SK-N-SH (cell line): ENCODE measurements at regions of chr2 and their contacts with region 1.

Region 1: DNA sequence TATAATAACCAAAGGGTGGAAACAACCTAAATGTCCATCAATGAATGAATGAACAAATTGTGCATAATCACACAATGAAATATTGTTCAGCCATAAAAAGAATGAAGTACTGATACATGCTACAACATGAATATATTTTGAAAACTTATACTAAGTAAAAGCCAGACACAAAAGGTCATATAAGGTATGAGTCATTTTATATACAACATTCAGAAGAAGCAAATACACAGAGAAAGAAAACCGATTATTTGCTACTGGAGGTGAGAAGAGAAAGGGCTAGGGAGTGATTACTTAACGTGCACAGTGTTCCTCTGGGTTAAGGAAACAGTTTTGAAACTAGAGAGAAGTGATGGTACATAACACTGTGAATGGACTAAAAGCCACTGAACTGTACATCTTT is 105.3 kb downstream of the GORASP2 start:
- DNase-seq: no peak
- H3K4me3 ChIP-seq: no peak overlapping the region
- H3K27ac ChIP-seq: no peak overlapping the region
- H3K4me1 ChIP-seq: no peaks in the 10 kb centered on the region
- H3K27me3 ChIP-seq: no peaks in the 10 kb centered on the region
- CTCF ChIP-seq: no peak
- EP300 ChIP-seq: no peak
- RAD21 ChIP-seq: no peak

Region 2: DNA sequence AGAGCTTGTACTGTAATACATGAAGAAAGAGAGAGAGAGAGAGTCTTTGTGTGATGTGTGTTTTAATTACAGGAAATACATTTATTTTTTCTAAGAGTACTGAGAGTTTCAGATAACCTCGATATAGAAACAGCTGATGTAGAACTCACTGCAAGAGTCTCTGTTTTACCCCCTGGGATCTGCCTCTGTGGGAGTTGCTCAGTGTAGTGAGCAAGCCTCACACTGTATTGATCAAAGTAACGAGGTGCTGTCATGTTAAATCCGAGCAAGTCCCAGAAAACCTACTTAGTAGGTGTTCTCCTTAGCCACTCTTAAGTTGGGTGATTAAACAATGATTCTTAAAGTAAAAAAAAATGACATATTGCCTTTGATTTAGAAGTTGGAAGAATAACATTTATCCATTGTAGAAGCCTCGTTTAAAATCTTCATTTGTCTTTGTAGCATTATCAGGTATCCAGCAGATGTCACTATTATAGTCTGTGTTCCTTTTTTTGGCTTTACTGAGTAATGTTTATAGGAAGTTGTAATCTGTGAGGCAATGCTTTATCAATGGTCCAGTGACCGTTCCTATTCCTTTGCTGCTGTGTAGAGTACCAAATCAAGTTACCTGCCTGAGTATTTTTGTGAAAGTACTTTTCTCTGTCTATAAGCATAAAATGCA is 637.4 kb before region 1 on chr2:
- CTCF ChIA-PET with region 1: no interaction called
- POLR2A ChIA-PET with region 1: no interaction called
- DNase-seq: peak; percentile 15
- H3K4me3 ChIP-seq: no peak overlapping the region
- H3K27ac ChIP-seq: no peak overlapping the region
- H3K4me1 ChIP-seq: peaks cover 0 to 4% of the 10 kb centered on the region in 2 experiments; a peak in 1 of 4 replicates
- H3K27me3 ChIP-seq: no peaks in the 10 kb centered on the region
- CTCF ChIP-seq: peak; percentile 54
- EP300 ChIP-seq: no peak
- RAD21 ChIP-seq: peak; percentile 48

Region 3: GRCh38 chr2:171013851-171014250 is 20.5 kb before region 1 on chr2:
- CTCF ChIA-PET with region 1: interaction called, 10 read pairs
- POLR2A ChIA-PET with region 1: no interaction called
- DNase-seq: no peak
- H3K4me3 ChIP-seq: no peak overlapping the region
- H3K27ac ChIP-seq: no peak overlapping the region
- H3K4me1 ChIP-seq: no peaks in the 10 kb centered on the region; a peak in 1 of 4 replicates
- H3K27me3 ChIP-seq: no peaks in the 10 kb centered on the region
- CTCF ChIP-seq: no peak
- EP300 ChIP-seq: no peak
- RAD21 ChIP-seq: no peak